IMR-90 (cell line): ENCODE measurements at regions of chr7 and their contacts with region 1.

Region 1: DNA sequence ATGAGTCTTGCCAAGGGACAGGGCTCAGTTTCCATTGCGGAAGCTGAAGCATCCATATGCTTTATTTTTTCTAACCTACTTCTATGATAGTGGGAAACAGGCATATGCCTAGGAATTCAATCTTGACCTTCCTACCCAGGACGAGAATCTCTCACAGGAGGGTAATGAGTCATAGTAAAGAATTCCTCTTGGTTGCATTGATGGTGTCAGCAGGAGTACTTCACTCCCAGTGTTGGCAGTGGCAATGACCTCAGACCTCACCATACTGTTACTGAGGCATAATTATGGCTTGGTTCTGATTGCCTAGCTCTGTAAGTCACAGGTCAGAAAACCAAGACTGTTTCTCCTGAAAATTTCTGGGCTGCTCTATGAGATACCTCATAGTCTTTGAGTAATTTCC is 552.9 kb downstream of the ARL4A start:
- DNase-seq: peak; percentile 51
- ATAC-seq: peak; percentile 59; the same call in 1 of the 2 replicates
- H3K4me3 ChIP-seq: no peak overlapping the region
- H3K27ac ChIP-seq: no peak overlapping the region
- H3K4me1 ChIP-seq: no peaks in the 10 kb centered on the region; the same call in 1 of the 2 replicates
- H3K27me3 ChIP-seq: no peaks in the 10 kb centered on the region
- CTCF ChIP-seq: no peak
- POLR2A ChIP-seq: no peak
- RAD21 ChIP-seq: no peak

Region 2: GRCh38 chr7:13050703-13051102 is 189.6 kb before region 1 on chr7:
- CTCF ChIA-PET with region 1: no interaction called
- POLR2A ChIA-PET with region 1: no interaction called
- dilution Hi-C with region 1: no loop called
- in situ Hi-C with region 1: no loop called
- intact Hi-C with region 1: no loop called
- DNase-seq: peak; percentile 94
- ATAC-seq: peak; percentile 84
- H3K4me3 ChIP-seq: no peak overlapping the region
- H3K27ac ChIP-seq: peak overlapping the region; percentile 89; the same call in 1 of the 2 replicates
- H3K4me1 ChIP-seq: peaks cover 10% of the 10 kb centered on the region
- H3K27me3 ChIP-seq: no peaks in the 10 kb centered on the region
- CTCF ChIP-seq: no peak
- POLR2A ChIP-seq: no peak
- RAD21 ChIP-seq: no peak

Region 3: DNA sequence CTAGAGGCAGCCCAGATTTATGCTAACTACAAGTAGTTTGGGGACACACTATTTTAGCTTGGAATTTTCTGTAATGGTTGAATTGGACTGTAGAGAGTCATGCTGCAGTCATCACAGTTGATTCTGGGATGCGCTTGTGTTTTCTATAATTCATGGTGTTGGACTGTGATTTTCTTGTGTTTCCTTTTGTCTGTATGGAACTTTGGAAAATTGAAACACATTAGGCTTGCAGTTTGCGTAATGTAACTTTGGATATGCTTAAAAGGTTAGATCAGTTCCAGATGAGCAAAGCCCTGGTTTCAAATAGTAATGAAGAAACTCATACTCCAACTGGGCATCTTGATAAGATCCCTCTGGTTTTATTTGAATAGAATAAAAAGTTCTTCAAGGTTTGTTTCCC is 50.7 kb before region 1 on chr7:
- CTCF ChIA-PET with region 1: no interaction called
- POLR2A ChIA-PET with region 1: no interaction called
- dilution Hi-C with region 1: no loop called
- in situ Hi-C with region 1: no loop called
- intact Hi-C with region 1: loop called (anchors 5 kb)
- DNase-seq: no peak
- ATAC-seq: no peak
- H3K4me3 ChIP-seq: no peak overlapping the region
- H3K27ac ChIP-seq: no peak overlapping the region
- H3K4me1 ChIP-seq: no peaks in the 10 kb centered on the region
- H3K27me3 ChIP-seq: no peaks in the 10 kb centered on the region
- CTCF ChIP-seq: no peak
- POLR2A ChIP-seq: no peak
- RAD21 ChIP-seq: no peak

Region 4: GRCh38 chr7:13336227-13336626 is 95.9 kb after region 1 on chr7:
- CTCF ChIA-PET with region 1: no interaction called
- POLR2A ChIA-PET with region 1: no interaction called
- dilution Hi-C with region 1: no loop called
- in situ Hi-C with region 1: no loop called
- intact Hi-C with region 1: no loop called
- DNase-seq: peak; percentile 29
- ATAC-seq: peak; percentile 63
- H3K4me3 ChIP-seq: no peak overlapping the region
- H3K27ac ChIP-seq: no peak overlapping the region
- H3K4me1 ChIP-seq: no peaks in the 10 kb centered on the region; the same call in 1 of the 2 replicates
- H3K27me3 ChIP-seq: no peaks in the 10 kb centered on the region
- CTCF ChIP-seq: no peak
- POLR2A ChIP-seq: no peak
- RAD21 ChIP-seq: no peak